Activated CD4-positive, alpha-beta memory T cell treated with anti-CD3 and anti-CD28 coated beads for 36 hours (primary cell): ENCODE measurements at regions of chr1 and their contacts with region 1.

Region 1: GRCh38 chr1:32716312-32717148 is 14.0 kb upstream of the SYNC start:
- DNase-seq: peak; percentile 85
- H3K4me3 Mint-ChIP-seq: no peak overlapping the region
- H3K27ac Mint-ChIP-seq: no peak overlapping the region
- H3K4me1 Mint-ChIP-seq: peaks cover 13% of the 10 kb centered on the region
- H3K27me3 Mint-ChIP-seq: no peaks in the 10 kb centered on the region

Region 2: GRCh38 chr1:32521165-32521564 is 195.4 kb before region 1 on chr1:
- CTCF ChIA-PET with region 1: interaction called, 16 read pairs
- POLR2A ChIA-PET with region 1: no interaction called
- intact Hi-C with region 1: no loop called
- DNase-seq: no peak
- H3K4me3 Mint-ChIP-seq: peak overlapping the region; percentile 64
- H3K27ac Mint-ChIP-seq: no peak overlapping the region
- H3K4me1 Mint-ChIP-seq: peaks cover 6% of the 10 kb centered on the region
- H3K27me3 Mint-ChIP-seq: peaks cover 7% of the 10 kb centered on the region

Region 3: DNA sequence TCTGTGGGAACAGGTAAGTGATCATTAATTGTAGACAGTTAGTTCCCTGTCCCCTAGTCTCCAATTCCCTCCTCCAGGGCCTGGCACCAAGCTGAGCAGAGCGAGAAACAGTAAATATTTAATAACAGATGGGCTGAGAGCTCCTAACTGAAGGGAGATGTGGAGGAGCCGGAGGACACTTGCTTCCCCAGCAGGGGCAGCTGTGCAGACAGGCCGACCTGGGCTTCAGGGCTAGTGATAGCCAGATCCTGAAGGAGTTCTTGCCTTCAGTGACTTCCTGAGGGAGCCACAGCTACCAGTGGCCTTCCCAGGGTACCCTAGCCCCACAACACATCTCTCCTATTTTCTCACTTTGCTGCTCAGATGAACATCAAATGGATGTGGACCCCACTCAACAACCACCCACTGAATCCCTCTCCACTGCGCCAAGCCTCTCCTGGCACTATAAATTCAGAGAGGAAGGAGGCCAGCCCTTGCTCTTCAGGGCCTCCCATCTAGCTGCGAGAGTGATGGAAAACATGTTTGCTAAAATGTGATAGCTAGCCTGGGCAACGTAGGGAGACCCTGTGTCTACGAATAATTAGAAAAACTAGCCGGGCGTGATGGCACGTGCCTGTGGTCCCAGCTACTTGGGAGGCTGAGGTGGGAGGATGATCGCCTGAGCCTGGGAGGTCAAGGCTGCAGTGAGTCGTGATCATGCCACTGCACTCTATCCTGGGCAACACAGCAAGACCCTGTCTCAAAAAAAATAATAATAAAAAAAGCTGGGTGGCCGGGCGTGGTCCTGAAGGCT is 12.9 kb after region 1 on chr1:
- CTCF ChIA-PET with region 1: interaction called, 28 read pairs
- POLR2A ChIA-PET with region 1: no interaction called
- intact Hi-C with region 1: no loop called
- DNase-seq: no peak
- H3K4me3 Mint-ChIP-seq: no peak overlapping the region
- H3K27ac Mint-ChIP-seq: no peak overlapping the region
- H3K4me1 Mint-ChIP-seq: peaks cover 13% of the 10 kb centered on the region
- H3K27me3 Mint-ChIP-seq: peaks cover 2% of the 10 kb centered on the region

Region 4: GRCh38 chr1:32753532-32754312 is 37.2 kb after region 1 on chr1:
- CTCF ChIA-PET with region 1: interaction called, 32 read pairs
- POLR2A ChIA-PET with region 1: no interaction called
- intact Hi-C with region 1: no loop called
- DNase-seq: peak; percentile 65
- H3K4me3 Mint-ChIP-seq: peak overlapping the region; percentile 47
- H3K27ac Mint-ChIP-seq: no peak overlapping the region
- H3K4me1 Mint-ChIP-seq: peaks cover 6% of the 10 kb centered on the region
- H3K27me3 Mint-ChIP-seq: peaks cover 4% of the 10 kb centered on the region

Region 5: GRCh38 chr1:32761253-32761880 is 44.8 kb after region 1 on chr1:
- CTCF ChIA-PET with region 1: interaction called, 32 read pairs
- POLR2A ChIA-PET with region 1: no interaction called
- intact Hi-C with region 1: no loop called
- DNase-seq: peak; percentile 75
- H3K4me3 Mint-ChIP-seq: no peak overlapping the region
- H3K27ac Mint-ChIP-seq: peak overlapping the region; percentile 44
- H3K4me1 Mint-ChIP-seq: peaks cover 27% of the 10 kb centered on the region
- H3K27me3 Mint-ChIP-seq: no peaks in the 10 kb centered on the region

Region 6: DNA sequence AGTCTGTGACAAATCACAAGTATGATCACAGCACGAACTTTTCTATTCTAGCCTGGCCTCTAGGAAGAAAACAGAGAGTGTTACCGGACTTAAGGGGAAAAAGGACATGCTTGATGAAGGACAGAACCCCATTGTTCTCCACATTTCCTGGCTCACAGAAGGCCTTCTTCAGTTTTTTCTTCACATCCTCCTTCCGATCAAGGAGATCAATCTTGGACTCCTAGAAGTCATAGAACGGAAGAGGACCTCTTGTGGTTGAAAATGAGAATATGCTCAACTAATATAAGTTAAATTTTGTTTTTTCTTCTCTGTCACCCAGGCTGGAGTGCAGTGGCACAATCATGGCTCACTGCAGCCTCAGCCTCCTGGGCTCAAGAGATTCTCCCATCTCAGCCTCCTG is 70.3 kb after region 1 on chr1:
- CTCF ChIA-PET with region 1: interaction called, 14 read pairs
- POLR2A ChIA-PET with region 1: interaction called, 6 read pairs
- intact Hi-C with region 1: no loop called
- DNase-seq: no peak
- H3K4me3 Mint-ChIP-seq: no peak overlapping the region
- H3K27ac Mint-ChIP-seq: no peak overlapping the region
- H3K4me1 Mint-ChIP-seq: peaks cover 6% of the 10 kb centered on the region
- H3K27me3 Mint-ChIP-seq: no peaks in the 10 kb centered on the region

Region 7: GRCh38 chr1:32870615-32871363 is 154.3 kb after region 1 on chr1 and contains the start of gene FNDC5:
- CTCF ChIA-PET with region 1: interaction called, 80 read pairs
- POLR2A ChIA-PET with region 1: no interaction called
- intact Hi-C with region 1: loop called (anchors 1 kb)
- DNase-seq: peak; percentile 10
- H3K4me3 Mint-ChIP-seq: no peak within 1 kb of the TSS
- H3K27ac Mint-ChIP-seq: no peak within 1 kb of the TSS
- H3K4me1 Mint-ChIP-seq: peaks cover 9% of the 10 kb centered on the region
- H3K27me3 Mint-ChIP-seq: peaks cover 40% of the 10 kb centered on the region
- total RNA-seq, gene FNDC5: not detected

Region 8: GRCh38 chr1:33007190-33008050 is 290.9 kb after region 1 on chr1:
- CTCF ChIA-PET with region 1: no interaction called
- POLR2A ChIA-PET with region 1: no interaction called
- intact Hi-C with region 1: no loop called
- DNase-seq: peak; percentile 40
- H3K4me3 Mint-ChIP-seq: no peak overlapping the region
- H3K27ac Mint-ChIP-seq: no peak overlapping the region
- H3K4me1 Mint-ChIP-seq: peaks cover 41% of the 10 kb centered on the region
- H3K27me3 Mint-ChIP-seq: no peaks in the 10 kb centered on the region